A549 (cell line): ENCODE measurements at regions of chr5 and their contacts with region 1.

Region 1: DNA sequence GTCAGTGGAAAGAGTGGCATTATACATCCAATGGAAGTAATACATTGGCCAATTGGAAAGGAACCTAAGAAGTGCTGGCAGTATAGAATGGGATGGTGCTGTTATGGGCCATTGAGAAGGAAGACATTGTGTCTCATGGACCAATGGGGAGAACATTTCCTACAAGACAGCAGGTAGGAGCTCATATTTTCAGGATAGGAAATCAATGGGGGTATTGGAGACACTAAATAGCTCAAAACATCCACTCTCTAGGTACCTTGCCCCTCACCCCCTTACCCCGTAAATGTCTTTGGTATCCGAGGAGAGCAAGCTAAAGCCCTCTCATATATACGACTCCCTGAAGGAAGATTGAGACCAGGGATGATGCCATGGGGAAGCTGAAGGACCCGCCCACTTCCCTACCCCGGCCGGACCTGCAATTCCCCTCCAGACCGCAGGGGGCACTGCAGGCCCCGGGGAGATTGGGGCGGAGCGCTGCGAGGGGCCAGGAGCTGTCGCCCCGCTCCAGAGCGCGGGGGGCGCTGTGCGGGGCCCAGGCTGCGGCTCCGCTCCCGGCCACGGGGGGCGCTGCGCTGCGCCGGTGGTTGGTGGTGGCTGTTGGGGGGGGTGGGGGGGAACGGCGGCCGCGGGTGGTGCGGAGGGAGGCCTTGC is at the start of gene KDM3B:
- DNase-seq: peak; percentile 87 to 94
- ATAC-seq: peak; percentile 60 to 76
- H3K4me3 ChIP-seq: peak within 1 kb of the TSS; percentile 99
- H3K27ac ChIP-seq: peak within 1 kb of the TSS; percentile 96 to 100
- H3K4me1 ChIP-seq: peaks cover 19% of the 10 kb centered on the region
- CTCF ChIP-seq: peak; percentile 99
- EP300 ChIP-seq: no peak
- POLR2A ChIP-seq: no peak
- RAD21 ChIP-seq: peak; percentile 21 to 31; a peak in 2 of 5 replicates
- polyA plus RNA-seq, gene KDM3B: 50.6 and 52.5 TPM in 2 replicates

Region 2: DNA sequence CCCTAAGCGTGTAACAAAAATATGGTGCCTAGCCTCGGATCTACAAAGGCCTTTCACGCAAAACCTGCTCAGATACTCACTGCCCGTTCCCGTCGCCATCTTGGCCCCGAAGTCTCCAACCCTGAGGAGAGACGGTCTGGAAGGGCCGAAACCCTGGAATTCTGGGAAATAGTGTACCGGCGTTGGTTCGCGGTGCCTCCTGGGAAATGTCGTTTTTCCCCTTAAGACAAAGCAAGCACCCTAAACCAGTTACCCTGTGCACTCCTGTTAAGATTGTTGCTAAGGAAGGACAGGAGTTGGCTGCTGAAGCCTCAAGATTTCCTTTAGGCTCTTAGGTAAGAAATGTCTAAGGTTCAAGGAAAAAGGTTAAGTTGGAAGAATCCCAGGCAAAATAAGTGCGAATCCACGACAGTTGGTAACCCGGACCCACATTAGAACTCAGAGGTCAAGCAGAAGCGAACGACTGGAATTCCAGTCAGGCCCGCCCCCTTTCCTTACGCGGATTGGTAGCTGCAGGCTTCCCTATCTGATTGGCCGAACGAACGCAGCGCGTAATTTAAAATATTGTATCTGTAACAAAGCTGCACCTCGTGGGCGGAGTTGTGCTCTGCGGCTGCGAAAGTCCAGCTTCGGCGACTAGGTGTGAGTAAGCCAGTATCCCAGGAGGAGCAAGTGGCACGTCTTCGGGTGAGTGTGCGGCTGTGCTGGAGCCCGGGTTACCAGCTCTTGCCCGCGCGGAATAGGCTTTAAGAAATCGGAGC is 173.5 kb before region 1 on chr5 and contains the starts of genes BRD8 and KIF20A:
- CTCF ChIA-PET with region 1: interaction called, 16 read pairs
- POLR2A ChIA-PET with region 1: interaction called, 5 read pairs
- DNase-seq: peak; percentile 96 to 97
- ATAC-seq: peak; percentile 92 to 94
- H3K4me3 ChIP-seq: peak within 1 kb of the TSS; percentile 80
- H3K27ac ChIP-seq: peak within 1 kb of the TSS; percentile 76 to 92
- H3K4me1 ChIP-seq: peaks cover 15% of the 10 kb centered on the region
- CTCF ChIP-seq: no peak
- EP300 ChIP-seq: no peak
- POLR2A ChIP-seq: peak; percentile 80
- RAD21 ChIP-seq: no peak
- polyA plus RNA-seq, gene BRD8: 82.3 and 85.8 TPM in 2 replicates
- polyA plus RNA-seq, gene KIF20A: 37.4 and 42.2 TPM in 2 replicates

Region 3: DNA sequence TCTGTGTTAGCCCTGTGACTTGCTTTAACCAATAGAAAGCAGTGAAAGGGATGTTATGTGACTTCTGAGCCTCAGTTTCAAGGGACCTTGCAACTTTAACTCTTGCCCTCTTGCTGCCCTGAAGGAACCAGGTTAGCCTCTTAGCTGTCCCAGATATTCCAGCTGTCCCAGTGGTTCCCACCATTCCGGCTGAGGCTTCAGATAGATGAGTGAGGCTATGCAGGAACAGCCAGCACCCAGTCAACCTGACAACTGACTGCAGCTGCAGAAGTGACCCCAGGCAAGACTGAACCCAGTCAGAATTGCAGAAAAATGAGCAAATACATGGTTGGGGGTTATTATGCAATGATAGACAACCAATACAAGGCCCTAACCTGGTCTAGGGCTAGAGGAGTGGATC is 128.7 kb before region 1 on chr5:
- CTCF ChIA-PET with region 1: interaction called, 31 read pairs
- POLR2A ChIA-PET with region 1: no interaction called
- DNase-seq: no peak
- ATAC-seq: peak; percentile 19 to 61; a peak in 5 of 6 replicates
- H3K4me3 ChIP-seq: no peak overlapping the region
- H3K27ac ChIP-seq: no peak overlapping the region
- H3K4me1 ChIP-seq: no peaks in the 10 kb centered on the region
- CTCF ChIP-seq: no peak
- EP300 ChIP-seq: no peak
- POLR2A ChIP-seq: no peak
- RAD21 ChIP-seq: no peak

Region 4: DNA sequence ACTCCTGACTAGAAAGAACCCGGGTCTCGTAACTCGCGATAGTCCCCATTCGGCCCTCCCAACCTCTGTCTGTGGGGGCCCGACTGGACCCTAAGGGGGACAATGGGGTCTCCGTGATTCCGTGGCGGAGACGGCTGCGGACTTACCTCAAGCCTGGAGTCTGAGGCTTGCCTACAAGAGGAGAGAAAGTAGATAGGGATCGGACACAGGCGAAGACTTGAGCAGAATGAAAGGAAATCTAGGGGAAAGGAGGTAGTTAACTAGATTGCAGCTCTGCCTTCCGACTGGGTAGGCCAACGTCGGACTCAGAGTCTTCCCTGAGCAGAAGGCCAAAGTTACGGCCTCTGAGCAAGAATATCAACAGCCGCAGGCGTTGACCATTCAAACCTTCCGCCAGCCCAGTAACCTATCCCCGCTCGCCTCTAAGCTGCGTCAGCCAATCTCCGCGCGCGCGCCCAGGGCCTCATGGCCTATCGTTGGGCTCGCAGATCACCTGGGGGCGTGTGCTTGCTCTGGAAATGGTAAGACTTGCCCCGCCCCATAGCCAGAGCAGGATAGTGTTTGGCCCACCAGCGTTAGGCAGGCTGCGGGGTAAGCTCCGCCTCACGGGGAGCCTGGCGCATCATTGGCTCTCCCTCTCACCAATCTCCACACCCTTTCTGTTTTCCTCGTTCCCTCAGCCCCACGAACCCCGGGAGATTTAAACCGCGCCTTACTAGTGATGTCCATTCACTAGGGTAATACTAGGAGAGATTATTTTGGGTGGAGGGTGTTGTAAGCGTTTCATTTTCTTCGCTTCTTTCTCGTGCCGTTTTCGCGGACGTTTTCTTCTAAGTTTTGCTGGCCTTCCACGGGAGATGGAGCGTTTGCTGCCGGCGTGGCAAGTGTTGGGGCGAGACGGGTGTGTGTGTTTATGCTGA is 20.5 kb before region 1 on chr5 and contains the start of gene CDC25C:
- CTCF ChIA-PET with region 1: interaction called, 197 read pairs
- POLR2A ChIA-PET with region 1: interaction called, 68 read pairs
- DNase-seq: peak; percentile 98 to 99
- ATAC-seq: peak; percentile 99 to 100
- H3K4me3 ChIP-seq: peak within 1 kb of the TSS; percentile 70
- H3K27ac ChIP-seq: peak within 1 kb of the TSS; percentile 64 to 83
- H3K4me1 ChIP-seq: peaks cover 15% of the 10 kb centered on the region; the same call in 2 of the 3 replicates
- CTCF ChIP-seq: no peak
- EP300 ChIP-seq: no peak
- POLR2A ChIP-seq: no peak
- RAD21 ChIP-seq: no peak
- polyA plus RNA-seq, gene CDC25C: 19.3 and 20.5 TPM in 2 replicates

Region 5: DNA sequence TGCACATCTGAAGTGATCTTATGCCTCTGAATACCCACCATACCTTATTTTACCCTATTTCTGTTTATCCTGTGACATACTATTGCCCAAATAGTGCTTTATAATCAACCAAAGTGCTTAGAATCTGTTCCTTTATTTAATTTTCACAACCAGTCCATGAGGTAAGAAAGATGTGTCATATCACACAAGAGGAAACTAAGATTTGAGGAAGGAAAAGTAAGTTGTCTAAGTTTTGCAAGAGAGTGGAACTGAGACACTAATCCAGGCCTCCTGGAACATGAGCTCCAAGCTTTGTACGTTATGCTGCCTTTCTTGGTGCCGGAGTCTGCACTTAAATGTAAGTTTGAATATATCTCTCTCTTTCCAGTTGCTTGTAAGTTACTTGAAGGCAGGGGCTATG is 17.5 kb after region 1 on chr5:
- CTCF ChIA-PET with region 1: interaction called, 67 read pairs
- POLR2A ChIA-PET with region 1: interaction called, 4 read pairs
- DNase-seq: no peak
- ATAC-seq: no peak
- H3K4me3 ChIP-seq: no peak overlapping the region
- H3K27ac ChIP-seq: no peak overlapping the region
- H3K4me1 ChIP-seq: no peaks in the 10 kb centered on the region
- CTCF ChIP-seq: no peak
- EP300 ChIP-seq: no peak
- POLR2A ChIP-seq: no peak
- RAD21 ChIP-seq: no peak

Region 6: DNA sequence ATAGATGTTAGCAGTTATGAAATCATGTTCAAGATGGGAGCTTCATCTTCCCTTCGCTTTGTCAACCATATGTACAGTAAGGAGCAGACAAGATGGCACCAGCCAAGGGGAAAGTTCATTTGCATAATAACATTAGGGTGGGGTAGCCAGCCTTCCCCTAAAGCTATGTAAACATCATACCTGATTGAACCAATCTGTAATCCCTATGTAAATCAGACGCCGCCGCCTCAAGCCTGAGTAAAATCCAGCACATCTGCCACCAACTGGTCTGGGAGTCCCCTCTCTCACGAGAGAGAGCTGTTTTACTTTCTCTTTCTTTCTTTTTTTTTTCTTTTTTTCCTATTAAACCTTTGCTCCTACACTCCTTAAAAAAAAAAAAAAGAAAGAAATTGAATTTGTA is 55.8 kb after region 1 on chr5:
- CTCF ChIA-PET with region 1: interaction called, 12 read pairs
- POLR2A ChIA-PET with region 1: no interaction called
- DNase-seq: no peak
- ATAC-seq: no peak
- H3K4me3 ChIP-seq: no peak overlapping the region
- H3K27ac ChIP-seq: no peak overlapping the region
- H3K4me1 ChIP-seq: no peaks in the 10 kb centered on the region
- CTCF ChIP-seq: no peak
- EP300 ChIP-seq: no peak
- POLR2A ChIP-seq: no peak
- RAD21 ChIP-seq: no peak